ENCODE measurements at regions of chr1 and their contacts with region 1.

Region 1: DNA sequence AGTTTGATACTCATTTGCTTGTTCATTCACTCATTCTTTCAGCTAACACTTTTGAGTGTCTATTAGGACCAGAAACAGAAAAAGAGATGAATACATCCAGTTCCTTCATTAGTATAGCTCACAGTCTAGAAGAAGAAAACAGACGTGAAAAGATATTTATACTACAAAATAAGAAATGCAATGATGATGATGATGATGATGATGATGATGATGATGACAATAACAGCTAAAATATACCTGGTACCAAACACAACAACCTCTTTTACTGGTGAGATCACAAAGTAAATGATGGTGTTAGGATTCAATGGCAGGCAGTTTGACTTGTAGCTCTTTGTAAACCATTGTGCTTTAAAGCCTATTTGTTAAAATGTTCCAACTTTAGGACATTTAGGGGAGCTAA is 203.6 kb upstream of the L1TD1 start:
- DNase-seq: no peak
- ATAC-seq: no peak
- H3K4me3 ChIP-seq: no peak overlapping the region
- H3K27ac ChIP-seq: no peak overlapping the region
- H3K4me1 ChIP-seq: no peaks in the 10 kb centered on the region
- H3K27me3 ChIP-seq: no peaks in the 10 kb centered on the region
- CTCF ChIP-seq: no peak

Region 2: GRCh38 chr1:60564916-60565750 is 1425.9 kb before region 1 on chr1:
- CTCF ChIA-PET with region 1: no interaction called
- POLR2A ChIA-PET with region 1: no interaction called
- in situ Hi-C with region 1: no loop called
- intact Hi-C with region 1: no loop called
- DNase-seq: no peak
- ATAC-seq: no peak
- H3K4me3 ChIP-seq: no peak overlapping the region
- H3K27ac ChIP-seq: no peak overlapping the region
- H3K4me1 ChIP-seq: no peaks in the 10 kb centered on the region
- H3K27me3 ChIP-seq: no peaks in the 10 kb centered on the region
- CTCF ChIP-seq: no peak

Region 3: GRCh38 chr1:63379583-63379982 is 1388.6 kb after region 1 on chr1:
- CTCF ChIA-PET with region 1: no interaction called
- POLR2A ChIA-PET with region 1: interaction called, 14 read pairs
- in situ Hi-C with region 1: no loop called
- intact Hi-C with region 1: no loop called
- DNase-seq: no peak
- ATAC-seq: no peak
- H3K4me3 ChIP-seq: no peak overlapping the region
- H3K27ac ChIP-seq: no peak overlapping the region
- H3K4me1 ChIP-seq: no peaks in the 10 kb centered on the region
- H3K27me3 ChIP-seq: no peaks in the 10 kb centered on the region
- CTCF ChIP-seq: no peak

Measured in Panc1 (cell line).